CD4-positive, alpha-beta memory T cell (primary cell): ENCODE measurements at regions of chr2 and their contacts with region 1.

Region 1: DNA sequence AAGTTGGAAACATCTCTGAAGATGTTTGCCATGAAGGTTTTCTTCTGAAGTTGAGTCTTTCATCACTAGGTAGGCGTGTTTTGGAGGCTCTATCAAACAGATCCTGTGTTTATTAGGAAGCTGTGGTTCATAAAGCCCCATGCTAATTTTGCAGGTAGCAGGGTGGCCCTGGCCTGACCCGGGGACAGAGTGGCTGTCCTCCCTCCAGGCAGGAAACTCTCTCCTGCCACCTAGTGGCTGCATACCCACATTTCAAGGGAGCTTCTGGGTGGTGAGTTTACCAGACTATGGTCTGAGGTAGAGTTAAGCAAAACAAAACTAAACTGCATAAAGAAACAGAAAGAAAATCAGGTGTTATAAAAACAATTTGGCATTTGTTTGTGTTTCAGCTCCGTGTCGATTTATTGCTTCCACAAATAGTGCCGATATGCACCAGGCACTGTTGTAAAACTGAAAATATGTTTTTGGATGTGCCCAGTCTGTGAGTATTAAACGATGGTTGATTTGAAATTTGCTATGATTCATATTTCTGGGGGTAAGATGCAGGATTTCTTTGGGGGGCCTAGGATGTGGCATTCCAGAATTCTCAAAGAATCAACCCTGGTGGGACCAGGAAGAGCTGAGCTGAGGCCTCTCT is 26.0 kb upstream of the IL37 start:
- DNase-seq: peak; percentile 55 to 65 (median 60)
- H3K4me3 ChIP-seq: no peak overlapping the region
- H3K4me3 Mint-ChIP-seq: peak overlapping the region in 2 of 8 donors; percentile 7 to 12
- H3K27ac ChIP-seq: no peak overlapping the region
- H3K27ac Mint-ChIP-seq: peak overlapping the region in 3 of 7 donors; percentile 6 to 23 (median 20)
- H3K4me1 ChIP-seq: no peaks in the 10 kb centered on the region
- H3K4me1 Mint-ChIP-seq: peaks cover 3 to 11% (median 8%) of the 10 kb centered on the region in 4 donors
- H3K27me3 ChIP-seq: no peaks in the 10 kb centered on the region
- H3K27me3 Mint-ChIP-seq: no peaks in the 10 kb centered on the region

Region 2: DNA sequence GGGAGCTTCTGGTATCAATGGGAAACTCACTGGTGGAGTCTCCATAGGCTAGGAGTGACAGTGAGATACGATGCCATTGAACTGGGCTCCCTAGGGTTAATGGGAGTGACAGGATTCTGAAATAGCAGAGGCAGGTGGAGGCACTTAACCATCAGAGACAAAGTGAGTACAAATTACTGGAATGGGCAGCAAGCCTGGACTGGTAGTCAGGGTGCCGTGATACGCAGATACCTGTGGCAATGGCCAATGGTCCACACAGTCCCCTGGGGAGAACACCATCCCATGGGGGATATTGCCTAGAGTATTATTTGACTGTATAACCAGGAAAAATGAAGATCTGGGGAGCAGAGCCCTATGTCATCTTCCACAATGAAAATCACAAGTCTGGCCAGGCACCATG is 283.2 kb before region 1 on chr2:
- CTCF ChIA-PET with region 1: interaction called, 12 read pairs
- POLR2A ChIA-PET with region 1: interaction called, 3 read pairs
- intact Hi-C with region 1: loop called (anchors 1 kb)
- DNase-seq: no peak
- H3K4me3 ChIP-seq: no peak overlapping the region
- H3K4me3 Mint-ChIP-seq: no peak overlapping the region
- H3K27ac ChIP-seq: no peak overlapping the region
- H3K27ac Mint-ChIP-seq: peak overlapping the region in 1 of 7 donors; percentile 77
- H3K4me1 ChIP-seq: peaks cover 6% of the 10 kb centered on the region
- H3K4me1 Mint-ChIP-seq: peaks cover 4 to 5% (median 4%) of the 10 kb centered on the region in 4 donors
- H3K27me3 ChIP-seq: no peaks in the 10 kb centered on the region
- H3K27me3 Mint-ChIP-seq: no peaks in the 10 kb centered on the region

Region 3: DNA sequence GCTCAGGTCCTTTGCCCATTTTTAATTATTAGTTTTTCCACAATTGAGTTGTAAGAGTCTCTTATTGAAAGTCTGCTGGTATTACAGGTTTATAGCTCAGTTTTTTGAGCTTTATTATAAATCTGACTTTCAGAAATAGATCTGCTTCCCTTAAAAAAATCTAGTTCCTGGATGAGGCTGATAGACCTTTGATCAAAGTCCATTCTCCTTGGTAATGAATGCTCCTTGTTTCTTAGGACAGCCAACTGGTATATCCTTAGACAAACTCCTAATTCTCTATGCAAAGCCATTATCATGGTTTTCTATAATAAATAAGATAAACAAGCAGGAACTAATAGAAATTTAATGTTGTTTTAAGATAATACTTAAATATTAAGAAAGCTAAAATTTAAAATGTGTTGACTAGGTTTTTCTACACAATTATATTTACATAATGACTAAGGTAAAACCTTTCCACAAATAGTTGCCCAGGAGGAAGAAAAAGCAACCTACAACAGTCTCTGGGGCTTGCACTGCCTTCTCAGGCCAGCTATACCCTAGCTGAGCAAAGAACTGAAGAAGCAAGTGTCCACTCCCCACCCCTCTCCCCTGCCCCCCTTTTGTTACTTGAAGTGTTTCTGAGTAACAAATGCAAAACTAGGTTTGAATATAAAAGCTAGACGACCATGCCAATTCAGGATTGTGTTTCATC is 147.3 kb before region 1 on chr2:
- CTCF ChIA-PET with region 1: interaction called, 22 read pairs
- POLR2A ChIA-PET with region 1: no interaction called
- intact Hi-C with region 1: no loop called
- DNase-seq: no peak
- H3K4me3 ChIP-seq: no peak overlapping the region
- H3K4me3 Mint-ChIP-seq: no peak overlapping the region
- H3K27ac ChIP-seq: no peak overlapping the region
- H3K27ac Mint-ChIP-seq: no peak overlapping the region
- H3K4me1 ChIP-seq: no peaks in the 10 kb centered on the region
- H3K4me1 Mint-ChIP-seq: no peaks in the 10 kb centered on the region
- H3K27me3 ChIP-seq: no peaks in the 10 kb centered on the region
- H3K27me3 Mint-ChIP-seq: peaks cover 0 to 2% of the 10 kb centered on the region in 2 donors

Region 4: GRCh38 chr2:112869258-112869885 is 15.6 kb before region 1 on chr2:
- CTCF ChIA-PET with region 1: interaction called, 12 read pairs
- POLR2A ChIA-PET with region 1: no interaction called
- intact Hi-C with region 1: no loop called
- DNase-seq: peak in 2 of 5 donors; percentile 6 to 10
- H3K4me3 ChIP-seq: no peak overlapping the region
- H3K4me3 Mint-ChIP-seq: no peak overlapping the region
- H3K27ac ChIP-seq: no peak overlapping the region
- H3K27ac Mint-ChIP-seq: peak overlapping the region in 1 of 7 donors; percentile 19
- H3K4me1 ChIP-seq: no peaks in the 10 kb centered on the region
- H3K4me1 Mint-ChIP-seq: peaks cover 0 to 6% (median 3%) of the 10 kb centered on the region in 4 donors
- H3K27me3 ChIP-seq: no peaks in the 10 kb centered on the region
- H3K27me3 Mint-ChIP-seq: peaks cover 15 to 18% of the 10 kb centered on the region in 2 donors

Region 5: DNA sequence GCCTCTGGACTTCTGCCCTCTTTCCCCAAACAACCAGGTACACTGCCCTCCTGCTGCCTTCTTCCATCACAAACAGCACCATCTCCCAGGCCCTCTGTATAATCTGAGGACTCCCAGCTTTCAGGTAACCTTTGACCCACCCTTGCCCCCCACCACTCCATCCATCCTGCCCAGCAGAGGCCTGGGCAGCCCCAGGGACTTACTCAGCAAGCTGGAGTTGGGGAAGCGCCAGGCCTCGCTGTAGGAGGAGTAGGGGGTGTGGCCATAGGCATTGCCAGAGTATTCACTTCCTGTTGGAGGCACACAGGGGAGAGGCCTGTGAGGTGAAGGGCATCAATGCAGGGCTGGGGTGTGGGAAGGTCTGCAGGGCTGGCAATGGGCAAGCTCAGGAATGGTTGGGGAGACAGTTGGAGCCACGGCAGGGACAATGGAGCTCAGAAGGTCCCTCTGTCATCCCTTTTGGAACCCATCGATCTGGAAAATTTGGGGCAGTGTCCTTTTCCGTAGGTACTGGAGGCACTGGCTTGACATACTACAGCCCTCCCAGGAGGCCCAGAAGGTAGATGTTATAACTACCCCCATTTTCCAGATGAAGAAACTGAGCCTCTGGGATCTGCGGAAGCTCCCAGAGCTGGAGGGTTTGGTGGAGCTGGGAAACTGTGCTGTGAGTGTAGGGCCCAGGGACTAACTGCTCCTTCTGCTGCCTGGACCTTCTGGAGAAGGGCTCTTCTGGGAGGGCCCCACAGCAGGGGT is 335.1 kb after region 1 on chr2:
- CTCF ChIA-PET with region 1: no interaction called
- POLR2A ChIA-PET with region 1: no interaction called
- intact Hi-C with region 1: no loop called
- DNase-seq: no peak
- H3K4me3 ChIP-seq: no peak overlapping the region
- H3K4me3 Mint-ChIP-seq: no peak overlapping the region
- H3K27ac ChIP-seq: no peak overlapping the region
- H3K27ac Mint-ChIP-seq: no peak overlapping the region
- H3K4me1 ChIP-seq: peaks cover 10% of the 10 kb centered on the region
- H3K4me1 Mint-ChIP-seq: peaks cover 9 to 18% (median 11%) of the 10 kb centered on the region in 4 donors
- H3K27me3 ChIP-seq: no peaks in the 10 kb centered on the region
- H3K27me3 Mint-ChIP-seq: no peaks in the 10 kb centered on the region